ENCODE measurements at regions of chr4 and their contacts with region 1.

Region 1: DNA sequence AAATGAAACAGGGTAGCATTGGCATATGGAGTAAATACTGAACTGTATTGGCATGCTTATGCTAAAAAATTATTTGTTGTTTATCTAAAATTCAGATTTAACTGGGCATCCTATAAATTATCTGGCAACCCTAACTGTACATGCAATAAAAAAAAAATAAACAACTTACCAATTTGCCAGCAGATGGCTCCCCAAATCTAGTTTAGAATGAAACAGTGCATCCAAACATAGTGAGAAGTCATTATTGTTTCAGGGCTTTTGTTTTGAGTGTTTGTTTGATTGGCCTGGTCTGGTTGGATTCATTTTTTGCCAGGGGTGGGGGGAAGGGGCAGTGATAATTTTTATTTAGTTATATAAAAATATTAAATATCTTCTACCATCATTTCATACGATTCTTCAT is 12.8 kb upstream of the NSUN7 start:
- DNase-seq: no peak
- H3K4me3 ChIP-seq: no peak overlapping the region
- H3K4me3 Mint-ChIP-seq: no peak overlapping the region
- H3K27ac Mint-ChIP-seq: no peak overlapping the region
- H3K4me1 ChIP-seq: no peaks in the 10 kb centered on the region
- H3K4me1 Mint-ChIP-seq: no peaks in the 10 kb centered on the region
- H3K27me3 ChIP-seq: no peaks in the 10 kb centered on the region
- H3K27me3 Mint-ChIP-seq: no peaks in the 10 kb centered on the region
- CTCF ChIP-seq: peak in 1 of 2 experiments; percentile 21

Region 2: GRCh38 chr4:40800064-40800463 is 63.2 kb after region 1 on chr4:
- CTCF ChIA-PET with region 1: no interaction called
- POLR2A ChIA-PET with region 1: no interaction called
- intact Hi-C with region 1: loop called (anchors 10 kb)
- DNase-seq: no peak
- H3K4me3 ChIP-seq: no peak overlapping the region
- H3K4me3 Mint-ChIP-seq: no peak overlapping the region
- H3K27ac Mint-ChIP-seq: no peak overlapping the region
- H3K4me1 ChIP-seq: no peaks in the 10 kb centered on the region
- H3K4me1 Mint-ChIP-seq: no peaks in the 10 kb centered on the region
- H3K27me3 ChIP-seq: no peaks in the 10 kb centered on the region
- H3K27me3 Mint-ChIP-seq: no peaks in the 10 kb centered on the region
- CTCF ChIP-seq: no peak

Region 3: GRCh38 chr4:40840985-40841571 is 104.2 kb after region 1 on chr4:
- CTCF ChIA-PET with region 1: no interaction called
- POLR2A ChIA-PET with region 1: no interaction called
- intact Hi-C with region 1: loop called (anchors 10 kb)
- DNase-seq: peak; percentile 78 to 80
- H3K4me3 ChIP-seq: no peak overlapping the region
- H3K4me3 Mint-ChIP-seq: no peak overlapping the region
- H3K27ac Mint-ChIP-seq: no peak overlapping the region
- H3K4me1 ChIP-seq: no peaks in the 10 kb centered on the region
- H3K4me1 Mint-ChIP-seq: no peaks in the 10 kb centered on the region
- H3K27me3 ChIP-seq: no peaks in the 10 kb centered on the region
- H3K27me3 Mint-ChIP-seq: no peaks in the 10 kb centered on the region
- CTCF ChIP-seq: peak; percentile 63 to 85

Region 4: DNA sequence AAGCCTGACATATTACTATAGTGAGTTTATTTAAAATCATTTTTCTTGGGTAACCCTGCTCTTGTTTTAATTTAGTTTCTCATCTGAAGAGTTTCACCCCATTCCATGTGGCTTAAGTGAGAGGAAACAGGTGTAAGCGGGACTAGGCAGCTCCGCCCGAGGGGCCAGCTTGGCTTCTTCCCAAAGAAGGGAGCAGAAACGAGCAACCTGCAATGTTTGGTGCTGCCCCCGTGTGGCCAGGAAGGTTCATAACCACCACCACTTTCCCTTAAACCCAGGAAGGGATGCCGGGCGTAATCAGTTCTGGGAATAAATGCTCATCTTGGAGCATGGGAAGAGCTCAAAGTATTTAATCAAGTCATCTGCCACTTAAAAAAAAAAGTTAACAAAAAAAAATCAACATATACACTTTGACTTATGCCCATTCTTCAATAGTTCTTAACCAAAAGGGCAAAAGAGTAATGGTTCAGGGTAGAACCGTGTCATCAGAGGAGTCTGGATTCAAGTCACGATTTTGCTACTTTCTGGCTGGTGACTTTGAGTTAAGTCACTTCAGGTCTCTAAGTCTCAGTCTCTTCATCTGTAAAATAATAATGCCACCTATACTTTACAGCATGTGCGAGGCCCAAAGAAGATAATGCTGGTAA is 160.8 kb after region 1 on chr4:
- CTCF ChIA-PET with region 1: no interaction called
- POLR2A ChIA-PET with region 1: no interaction called
- intact Hi-C with region 1: loop called (anchors 1 kb)
- DNase-seq: peak; percentile 51 to 72
- H3K4me3 ChIP-seq: no peak overlapping the region
- H3K4me3 Mint-ChIP-seq: peak overlapping the region; percentile 30
- H3K27ac Mint-ChIP-seq: no peak overlapping the region
- H3K4me1 ChIP-seq: no peaks in the 10 kb centered on the region
- H3K4me1 Mint-ChIP-seq: peaks cover 9% of the 10 kb centered on the region
- H3K27me3 ChIP-seq: no peaks in the 10 kb centered on the region
- H3K27me3 Mint-ChIP-seq: no peaks in the 10 kb centered on the region
- CTCF ChIP-seq: peak; percentile 61 to 67

Region 5: DNA sequence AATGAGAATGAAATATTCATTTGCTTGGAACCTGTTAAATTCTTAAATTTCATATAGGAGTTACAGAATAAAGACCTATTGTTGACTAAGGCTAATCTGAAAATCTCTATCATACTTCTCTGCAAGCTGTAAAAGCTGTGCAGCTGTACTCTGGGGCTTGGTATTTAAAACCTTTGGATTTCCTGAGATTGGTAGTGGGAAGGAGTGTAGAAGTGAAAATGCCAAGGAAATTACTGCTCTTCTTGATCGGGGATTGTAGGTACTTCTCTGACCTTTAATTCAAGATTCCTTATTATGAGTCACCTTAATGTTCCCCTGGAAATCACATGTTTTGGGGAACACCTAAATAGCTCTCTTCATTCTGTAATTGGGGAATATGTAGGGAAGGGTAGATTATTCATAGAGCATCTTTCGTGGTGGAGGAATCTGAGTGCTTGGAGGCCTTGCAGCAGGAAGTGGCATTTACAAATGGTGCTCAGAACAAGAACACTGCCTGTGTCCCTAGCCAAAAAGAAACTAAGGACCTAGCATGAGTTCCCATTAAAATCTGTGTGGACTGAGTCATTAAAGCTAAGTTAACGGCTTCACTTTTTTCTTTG is 657.6 kb after region 1 on chr4:
- CTCF ChIA-PET with region 1: no interaction called
- POLR2A ChIA-PET with region 1: no interaction called
- intact Hi-C with region 1: no loop called
- DNase-seq: no peak
- H3K4me3 ChIP-seq: no peak overlapping the region
- H3K4me3 Mint-ChIP-seq: no peak overlapping the region
- H3K27ac Mint-ChIP-seq: no peak overlapping the region
- H3K4me1 ChIP-seq: no peaks in the 10 kb centered on the region
- H3K4me1 Mint-ChIP-seq: no peaks in the 10 kb centered on the region
- H3K27me3 ChIP-seq: no peaks in the 10 kb centered on the region
- H3K27me3 Mint-ChIP-seq: no peaks in the 10 kb centered on the region
- CTCF ChIP-seq: no peak

Region 6: GRCh38 chr4:41505161-41505661 is 768.3 kb after region 1 on chr4:
- CTCF ChIA-PET with region 1: interaction called, 12 read pairs
- POLR2A ChIA-PET with region 1: no interaction called
- intact Hi-C with region 1: no loop called
- DNase-seq: no peak
- H3K4me3 ChIP-seq: no peak overlapping the region
- H3K4me3 Mint-ChIP-seq: no peak overlapping the region
- H3K27ac Mint-ChIP-seq: peak overlapping the region; percentile 72
- H3K4me1 ChIP-seq: peaks cover 36% of the 10 kb centered on the region
- H3K4me1 Mint-ChIP-seq: peaks cover 35% of the 10 kb centered on the region
- H3K27me3 ChIP-seq: no peaks in the 10 kb centered on the region
- H3K27me3 Mint-ChIP-seq: no peaks in the 10 kb centered on the region
- CTCF ChIP-seq: no peak